ENCODE measurements at regions of chr1 and their contacts with region 1.

Region 1: GRCh38 chr1:161132410-161133219 is at the start of gene DEDD:
- H3K4me3 ChIP-seq: peak within 1 kb of the TSS; percentile 84
- H3K27ac ChIP-seq: peak within 1 kb of the TSS; percentile 91
- H3K4me1 ChIP-seq: 0 out of 2 replicates have a peak, but pooled peaks cover 2% of the 10 kb centered on the region
- CTCF ChIP-seq: peak; percentile 71; the same call in 1 of the 2 replicates

Region 2: DNA sequence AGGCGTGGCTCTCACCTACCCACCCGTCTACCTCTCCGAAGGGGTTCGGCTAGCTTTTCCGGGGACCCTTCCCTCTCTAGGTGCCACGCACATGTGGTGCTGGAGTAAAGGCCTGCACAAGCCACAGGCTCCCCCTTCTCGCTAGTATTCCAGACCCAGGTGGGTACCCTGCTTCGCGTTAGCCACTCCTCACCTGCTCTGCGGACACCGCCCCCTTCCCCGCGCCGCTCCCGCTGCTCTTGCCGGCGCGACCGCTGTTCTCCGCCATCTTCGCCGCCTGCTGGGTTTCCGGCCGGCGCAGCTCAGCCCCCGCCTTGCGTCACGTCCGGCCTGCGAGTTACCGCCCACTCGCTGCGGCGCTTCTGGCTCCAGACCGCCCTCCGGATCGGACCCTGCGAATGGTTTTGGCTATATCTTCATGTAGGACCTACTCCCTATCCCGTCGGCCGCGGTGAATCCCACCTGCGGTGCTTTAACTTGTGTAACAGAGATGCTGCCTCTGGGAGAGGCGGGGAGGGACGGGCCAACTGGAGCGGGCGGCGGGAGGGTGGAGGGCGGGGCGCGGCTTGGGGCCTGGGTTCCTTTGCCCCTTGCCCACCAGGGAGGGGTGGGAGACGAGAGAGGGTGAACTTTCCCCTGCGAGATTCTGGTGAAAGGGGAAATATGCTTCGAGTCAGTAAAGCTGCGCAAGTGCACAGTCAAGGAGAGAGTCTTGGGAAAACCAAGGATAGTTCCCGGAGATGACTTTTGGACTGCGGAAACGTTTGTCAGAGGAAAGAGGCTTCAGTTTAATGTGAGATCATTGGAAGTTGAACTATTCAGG is 14.6 kb before region 1 on chr1 and contains the starts of genes NIT1 and PFDN2:
- CTCF ChIA-PET with region 1: interaction called, 5 read pairs
- POLR2A ChIA-PET with region 1: interaction called, 28 read pairs
- H3K4me3 ChIP-seq: peak within 1 kb of the TSS; percentile 89
- H3K27ac ChIP-seq: peak within 1 kb of the TSS; percentile 60
- H3K4me1 ChIP-seq: peaks cover 9% of the 10 kb centered on the region
- CTCF ChIP-seq: peak; percentile 77

Region 3: DNA sequence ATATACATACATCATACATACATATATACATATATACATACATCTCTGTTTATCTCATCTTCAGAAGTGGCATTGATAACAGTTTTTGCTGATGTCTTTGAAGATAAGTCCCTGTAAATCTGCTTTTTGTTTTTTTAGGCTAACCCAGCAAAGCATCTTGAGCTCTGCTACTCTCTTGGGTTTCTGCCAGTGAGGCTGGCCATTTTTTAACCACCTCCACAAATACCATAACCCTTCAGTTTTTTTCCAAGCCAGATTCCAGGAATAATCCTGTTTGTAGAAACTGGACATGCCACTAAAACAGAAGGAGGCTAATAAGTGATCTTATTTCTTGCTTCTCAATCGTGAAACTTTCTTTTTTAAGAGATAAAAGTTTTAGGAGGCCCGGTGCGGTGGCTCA is 203.2 kb after region 1 on chr1:
- CTCF ChIA-PET with region 1: no interaction called
- POLR2A ChIA-PET with region 1: no interaction called
- H3K4me3 ChIP-seq: no peak overlapping the region
- H3K27ac ChIP-seq: no peak overlapping the region
- H3K4me1 ChIP-seq: no peaks in the 10 kb centered on the region
- CTCF ChIP-seq: no peak

Measured in HEK293 (cell line).